ENCODE measurements at regions of chr1 and their contacts with region 1.

Region 1: DNA sequence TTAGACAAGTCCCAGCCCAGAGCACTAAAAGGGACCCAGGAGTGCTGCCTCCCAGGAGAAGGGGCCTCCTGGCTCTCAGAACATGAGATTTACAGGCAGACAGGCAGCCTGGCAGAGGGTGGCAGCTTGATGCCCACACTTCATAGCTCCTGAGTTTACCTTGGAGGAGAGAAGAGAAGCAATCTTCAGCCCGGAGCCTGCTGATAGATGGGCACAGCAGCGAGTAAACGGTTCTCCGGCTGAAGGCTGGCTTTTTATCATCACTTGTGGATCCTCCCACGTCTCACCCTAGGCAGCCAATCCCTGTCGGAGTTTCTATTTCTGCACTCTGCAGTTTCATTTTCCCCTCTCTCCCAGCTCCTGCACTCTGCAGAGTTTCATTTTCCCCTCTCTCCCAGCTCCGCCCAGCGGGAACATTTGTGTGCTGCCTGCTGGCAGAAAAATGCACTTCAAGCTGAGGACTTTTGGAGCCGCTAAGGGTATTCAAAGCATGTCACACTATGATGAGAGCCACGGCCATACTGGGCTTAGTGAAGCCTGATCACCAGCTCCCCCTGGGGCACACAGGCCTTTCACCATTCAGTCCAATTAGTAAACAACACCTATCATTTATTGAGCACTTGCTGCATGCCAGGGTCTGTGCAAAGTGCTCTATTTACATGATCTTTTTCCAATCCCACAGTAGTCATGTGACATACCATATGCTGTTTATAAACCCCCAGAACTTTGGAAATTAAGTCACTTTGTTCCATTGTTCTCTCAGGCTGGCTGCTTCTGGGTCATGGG is at the start of gene IFI6:
- DNase-seq: peak; percentile 92
- H3K4me3 ChIP-seq: peak within 1 kb of the TSS; percentile 70
- H3K27ac ChIP-seq: peak within 1 kb of the TSS; percentile 85
- H3K27me3 ChIP-seq: no peaks in the 10 kb centered on the region
- CTCF ChIP-seq: peak; percentile 51
- polyA plus RNA-seq, gene IFI6: 26.8 and 29.6 TPM in 2 replicates

Region 2: DNA sequence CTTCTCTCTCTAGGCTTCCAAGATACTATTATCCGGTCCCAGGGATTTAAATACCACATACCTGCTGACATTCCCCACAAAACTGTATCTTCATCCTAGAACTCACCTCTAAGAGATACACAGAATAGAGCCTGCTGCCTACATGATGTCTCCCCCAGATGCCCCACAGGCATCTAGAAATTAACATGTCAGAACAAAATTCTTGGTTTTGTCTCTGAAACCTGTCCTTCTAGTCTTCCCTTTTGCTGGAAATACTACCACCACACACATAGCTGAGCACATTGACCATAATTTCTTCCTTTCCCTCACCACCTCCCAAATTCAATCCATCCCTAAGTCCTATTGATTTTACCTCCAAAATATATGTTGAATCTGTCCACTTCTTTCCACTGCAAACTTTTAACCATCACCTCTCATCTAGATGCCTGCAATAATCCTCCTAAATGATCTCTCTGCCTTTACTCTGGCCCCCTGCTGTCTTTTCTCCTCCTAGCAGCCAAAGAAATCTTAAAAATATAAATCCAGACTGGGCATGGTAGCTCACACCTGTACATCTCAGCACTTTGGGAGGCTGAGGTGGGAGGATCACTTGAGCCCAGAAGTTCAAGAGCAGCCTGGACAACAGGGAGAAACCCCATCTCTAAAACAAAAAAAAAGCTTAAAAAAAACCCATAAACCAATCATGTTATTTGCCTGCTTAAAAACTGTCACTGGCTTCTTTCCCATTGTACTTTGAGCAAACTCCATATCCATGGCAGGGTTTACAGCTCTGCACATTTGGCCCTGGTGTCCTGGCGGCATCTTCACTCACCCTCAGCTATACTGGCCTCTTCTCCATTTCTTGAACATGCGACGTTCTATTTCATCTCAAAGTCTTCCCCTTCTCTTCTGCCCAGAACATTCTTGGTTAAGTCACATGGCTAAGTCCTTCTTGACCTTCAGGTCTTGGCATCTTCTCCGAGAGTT is 47.4 kb after region 1 on chr1:
- CTCF ChIA-PET with region 1: interaction called, 22 read pairs
- POLR2A ChIA-PET with region 1: no interaction called
- DNase-seq: no peak
- H3K4me3 ChIP-seq: no peak overlapping the region
- H3K27ac ChIP-seq: no peak overlapping the region
- H3K27me3 ChIP-seq: peaks cover 24% of the 10 kb centered on the region
- CTCF ChIP-seq: peak; percentile 59

Region 3: DNA sequence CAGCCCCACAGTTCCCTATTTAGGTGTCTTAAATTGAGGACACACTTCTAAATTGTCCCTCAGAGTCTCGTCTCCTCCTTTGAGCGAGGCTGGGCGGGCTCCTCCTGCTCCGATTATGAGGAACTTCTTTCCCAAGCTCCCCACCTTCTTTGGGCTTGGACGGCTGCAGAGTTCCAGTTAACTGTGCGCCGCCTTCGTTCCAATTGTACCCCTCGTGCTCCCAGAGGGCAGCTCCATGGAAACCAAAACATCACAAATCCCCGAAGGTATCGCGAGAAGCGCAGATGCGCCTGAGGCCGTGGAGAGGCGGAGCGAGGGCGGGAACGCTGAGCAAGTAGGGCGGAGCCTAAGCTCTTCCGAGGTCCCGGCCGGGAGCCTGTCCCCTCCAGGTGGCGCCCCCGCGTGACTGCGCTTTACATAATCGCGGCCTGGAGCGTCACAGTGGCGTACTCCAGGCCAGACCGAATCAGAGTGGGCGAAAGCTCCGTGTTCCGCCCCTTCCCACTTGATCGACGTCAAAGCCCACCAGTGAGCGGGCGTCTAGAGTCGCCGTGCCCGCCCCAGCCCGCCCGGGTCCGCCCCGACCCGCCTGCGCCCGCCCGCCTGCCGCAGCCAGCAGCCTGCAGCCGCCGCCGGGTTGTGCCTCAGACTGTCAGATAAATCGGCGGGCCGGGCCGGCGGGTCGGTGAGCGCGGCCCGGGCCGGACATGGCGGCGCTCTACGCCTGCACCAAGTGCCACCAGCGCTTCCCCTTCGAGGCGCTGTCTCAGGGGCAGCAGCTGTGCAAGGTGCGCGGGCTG is 53.4 kb after region 1 on chr1 and contains the start of gene FAM76A:
- CTCF ChIA-PET with region 1: interaction called, 22 read pairs
- POLR2A ChIA-PET with region 1: interaction called, 14 read pairs
- DNase-seq: peak; percentile 99
- H3K4me3 ChIP-seq: peak within 1 kb of the TSS; percentile 85
- H3K27ac ChIP-seq: peak within 1 kb of the TSS; percentile 61
- H3K27me3 ChIP-seq: no peaks in the 10 kb centered on the region
- CTCF ChIP-seq: peak; percentile 46
- polyA plus RNA-seq, gene FAM76A: 4.1 and 4.9 TPM in 2 replicates